OCI-LY7 (cell line): ENCODE measurements at regions of chr6 and their contacts with region 1.

Region 1: DNA sequence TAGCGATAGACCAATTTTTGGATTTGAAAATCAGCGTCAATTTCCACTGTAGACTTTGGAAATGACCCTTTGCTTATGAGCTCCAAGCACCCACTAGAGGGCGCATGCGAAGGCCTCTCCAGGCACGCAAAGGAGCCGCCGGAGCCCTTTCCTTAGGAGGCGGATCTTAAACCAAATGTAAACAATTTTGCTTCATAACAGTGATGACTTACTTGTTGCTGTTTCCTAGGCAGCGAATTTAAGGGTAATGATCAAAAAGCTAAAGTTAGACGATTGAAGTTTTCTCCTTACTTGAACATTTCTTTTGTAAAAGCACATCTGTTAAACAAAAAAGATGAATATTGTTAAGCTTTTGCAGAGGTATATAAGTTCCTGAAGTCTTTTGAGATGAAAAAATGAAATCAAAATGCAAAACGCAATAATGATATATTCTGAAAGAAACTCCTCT is 29.2 kb upstream of the EXOC2 start:
- DNase-seq: peak; percentile 77
- H3K4me3 ChIP-seq: no peak overlapping the region
- H3K27ac ChIP-seq: no peak overlapping the region
- H3K4me1 ChIP-seq: peaks cover 10% of the 10 kb centered on the region
- CTCF ChIP-seq: peak; percentile 99

Region 2: GRCh38 chr6:786946-787763 is 65.1 kb after region 1 on chr6:
- CTCF ChIA-PET with region 1: no interaction called
- POLR2A ChIA-PET with region 1: no interaction called
- intact Hi-C with region 1: loop called (anchors 5 kb)
- DNase-seq: peak; percentile 35
- H3K4me3 ChIP-seq: no peak overlapping the region
- H3K27ac ChIP-seq: no peak overlapping the region
- H3K4me1 ChIP-seq: no peaks in the 10 kb centered on the region
- CTCF ChIP-seq: peak; percentile 83